Right ventricle myocardium inferior (tissue), 1 donor: ENCODE measurements at regions of chr1 and their contacts with region 1.

Region 1: GRCh38 chr1:184222652-184223052 is 164.2 kb upstream of the C1orf21 start:
- DNase-seq: no peak
- ATAC-seq: peak; percentile 59

Region 2: DNA sequence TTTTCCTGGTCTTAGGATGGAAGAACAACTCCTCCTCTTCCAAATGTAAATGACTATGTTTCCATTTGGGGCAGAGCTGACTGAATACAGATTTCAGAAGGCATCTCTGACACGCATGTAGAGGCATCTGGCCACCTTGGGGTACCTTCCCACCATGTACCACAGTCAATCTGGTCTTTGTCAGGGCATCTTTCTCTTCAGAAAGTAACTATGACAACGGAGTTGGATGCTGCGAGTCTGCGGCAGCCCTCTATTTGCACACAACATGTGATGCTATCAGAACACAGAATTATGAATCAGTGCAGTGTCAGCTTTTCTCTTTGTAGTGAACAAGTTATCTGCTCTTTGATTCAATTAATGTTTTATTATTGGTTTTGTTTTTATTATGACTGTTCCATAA is 76.4 kb before region 1 on chr1:
- intact Hi-C with region 1: loop called (anchors 5 kb)
- DNase-seq: no peak
- ATAC-seq: no peak